Caco-2 (cell line): ENCODE measurements at regions of chr3 and their contacts with region 1.

Region 1: DNA sequence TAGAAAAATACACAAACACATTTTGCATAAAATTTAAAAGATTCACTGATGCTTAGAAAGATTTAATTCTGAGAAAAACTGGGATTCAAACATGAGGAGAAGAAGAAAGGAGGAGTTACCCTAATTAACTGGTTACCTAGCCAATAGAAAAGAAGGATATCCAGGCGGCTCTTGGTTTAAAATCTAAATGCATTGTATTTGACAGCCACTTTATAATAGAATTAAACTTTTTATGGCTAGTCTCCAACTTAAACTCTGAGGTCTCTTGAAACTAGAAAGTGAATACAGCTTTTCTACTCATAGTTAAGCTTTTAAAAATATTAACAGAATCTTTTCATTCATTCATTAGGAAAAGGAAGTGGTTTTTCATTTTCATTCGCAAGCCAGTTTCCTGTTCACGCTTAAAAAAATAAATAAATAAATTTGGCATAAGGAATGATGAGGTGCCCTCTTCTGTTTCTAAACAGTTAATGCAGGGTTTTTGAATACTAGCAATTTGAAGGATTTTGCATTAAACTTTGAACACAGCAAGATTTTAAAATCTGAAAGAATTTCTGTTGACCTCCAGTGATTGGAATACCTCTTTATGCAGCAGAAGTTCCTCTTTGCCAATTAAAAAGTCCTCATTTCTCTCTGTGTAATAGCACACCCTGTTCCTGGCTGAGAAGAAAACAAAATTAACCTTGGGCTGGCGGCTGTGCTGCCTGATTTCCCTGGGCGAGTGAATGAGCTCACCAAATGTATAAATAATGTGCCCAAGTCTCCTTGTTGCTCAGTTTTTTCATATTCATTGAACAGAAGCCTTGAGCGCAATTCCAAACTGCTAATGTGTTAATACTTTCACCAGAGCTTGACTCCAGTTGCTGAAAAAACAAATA is 105.1 kb downstream of the ZMAT3 start:
- DNase-seq: no peak
- H3K4me3 ChIP-seq: no peak overlapping the region
- H3K4me3 Mint-ChIP-seq: no peak overlapping the region
- H3K27ac Mint-ChIP-seq: no peak overlapping the region
- H3K4me1 ChIP-seq: no peaks in the 10 kb centered on the region; the same call in none of the 2 replicates
- H3K4me1 Mint-ChIP-seq: no peaks in the 10 kb centered on the region
- H3K27me3 ChIP-seq: no peaks in the 10 kb centered on the region
- H3K27me3 Mint-ChIP-seq: no peaks in the 10 kb centered on the region
- CTCF ChIP-seq: peak; percentile 41 to 61

Region 2: GRCh38 chr3:178623666-178624255 is 342.8 kb before region 1 on chr3:
- CTCF ChIA-PET with region 1: no interaction called
- POLR2A ChIA-PET with region 1: no interaction called
- intact Hi-C with region 1: loop called (anchors 10 kb)
- DNase-seq: no peak
- H3K4me3 ChIP-seq: no peak overlapping the region
- H3K4me3 Mint-ChIP-seq: no peak overlapping the region
- H3K27ac Mint-ChIP-seq: no peak overlapping the region
- H3K4me1 ChIP-seq: no peaks in the 10 kb centered on the region
- H3K4me1 Mint-ChIP-seq: no peaks in the 10 kb centered on the region
- H3K27me3 ChIP-seq: no peaks in the 10 kb centered on the region
- H3K27me3 Mint-ChIP-seq: no peaks in the 10 kb centered on the region
- CTCF ChIP-seq: no peak

Region 3: GRCh38 chr3:178663201-178663934 is 303.2 kb before region 1 on chr3:
- CTCF ChIA-PET with region 1: no interaction called
- POLR2A ChIA-PET with region 1: no interaction called
- intact Hi-C with region 1: no loop called
- DNase-seq: no peak
- H3K4me3 ChIP-seq: no peak overlapping the region
- H3K4me3 Mint-ChIP-seq: no peak overlapping the region
- H3K27ac Mint-ChIP-seq: peak overlapping the region; percentile 84
- H3K4me1 ChIP-seq: peaks cover 32% of the 10 kb centered on the region
- H3K4me1 Mint-ChIP-seq: peaks cover 28% of the 10 kb centered on the region
- H3K27me3 ChIP-seq: no peaks in the 10 kb centered on the region
- H3K27me3 Mint-ChIP-seq: no peaks in the 10 kb centered on the region
- CTCF ChIP-seq: no peak

Region 4: GRCh38 chr3:178718995-178719635 is 247.4 kb before region 1 on chr3:
- CTCF ChIA-PET with region 1: no interaction called
- POLR2A ChIA-PET with region 1: no interaction called
- intact Hi-C with region 1: loop called (anchors 10 kb)
- DNase-seq: no peak
- H3K4me3 ChIP-seq: no peak overlapping the region
- H3K4me3 Mint-ChIP-seq: no peak overlapping the region
- H3K27ac Mint-ChIP-seq: no peak overlapping the region
- H3K4me1 ChIP-seq: no peaks in the 10 kb centered on the region
- H3K4me1 Mint-ChIP-seq: no peaks in the 10 kb centered on the region
- H3K27me3 ChIP-seq: no peaks in the 10 kb centered on the region
- H3K27me3 Mint-ChIP-seq: no peaks in the 10 kb centered on the region
- CTCF ChIP-seq: no peak

Region 5: DNA sequence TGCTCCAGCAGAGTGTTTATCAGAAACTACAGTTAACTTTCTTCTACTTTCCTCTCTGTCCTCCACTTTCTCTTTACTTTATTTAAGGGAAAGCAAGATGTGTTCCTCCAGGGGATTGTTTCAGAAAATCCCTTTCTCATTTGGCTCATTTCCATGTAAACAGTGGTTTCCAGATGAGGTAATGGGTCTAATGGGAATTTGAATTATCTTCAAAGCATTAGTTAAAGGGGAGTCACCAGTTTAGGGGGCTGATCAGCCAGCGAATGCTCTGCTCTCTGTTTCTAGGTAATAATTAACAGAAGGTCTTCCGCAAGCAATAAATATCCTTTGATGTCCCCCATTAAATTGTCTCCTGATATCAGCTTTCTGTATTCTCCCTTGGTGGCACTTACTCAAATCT is 325.9 kb after region 1 on chr3:
- CTCF ChIA-PET with region 1: no interaction called
- POLR2A ChIA-PET with region 1: no interaction called
- intact Hi-C with region 1: no loop called
- DNase-seq: no peak
- H3K4me3 ChIP-seq: no peak overlapping the region
- H3K4me3 Mint-ChIP-seq: no peak overlapping the region
- H3K27ac Mint-ChIP-seq: peak overlapping the region; percentile 69
- H3K4me1 ChIP-seq: peaks cover 10% of the 10 kb centered on the region
- H3K4me1 Mint-ChIP-seq: peaks cover 26% of the 10 kb centered on the region
- H3K27me3 ChIP-seq: no peaks in the 10 kb centered on the region
- H3K27me3 Mint-ChIP-seq: no peaks in the 10 kb centered on the region
- CTCF ChIP-seq: no peak